Activated B cell treated with CpG ODN at 0.5 μM for 24 hours (primary cell): ENCODE measurements at regions of chr6 and their contacts with region 1.

Region 1: GRCh38 chr6:43667245-43668150 is 20.1 kb downstream of the MRPS18A start:
- DNase-seq: peak; percentile 84
- ATAC-seq: peak; percentile 80
- H3K4me3 Mint-ChIP-seq: peak overlapping the region; percentile 36
- H3K27ac Mint-ChIP-seq: peak overlapping the region; percentile 64
- H3K4me1 Mint-ChIP-seq: peaks cover 18% of the 10 kb centered on the region
- H3K27me3 Mint-ChIP-seq: no peaks in the 10 kb centered on the region
- CTCF ChIP-seq: peak; percentile 42

Region 2: DNA sequence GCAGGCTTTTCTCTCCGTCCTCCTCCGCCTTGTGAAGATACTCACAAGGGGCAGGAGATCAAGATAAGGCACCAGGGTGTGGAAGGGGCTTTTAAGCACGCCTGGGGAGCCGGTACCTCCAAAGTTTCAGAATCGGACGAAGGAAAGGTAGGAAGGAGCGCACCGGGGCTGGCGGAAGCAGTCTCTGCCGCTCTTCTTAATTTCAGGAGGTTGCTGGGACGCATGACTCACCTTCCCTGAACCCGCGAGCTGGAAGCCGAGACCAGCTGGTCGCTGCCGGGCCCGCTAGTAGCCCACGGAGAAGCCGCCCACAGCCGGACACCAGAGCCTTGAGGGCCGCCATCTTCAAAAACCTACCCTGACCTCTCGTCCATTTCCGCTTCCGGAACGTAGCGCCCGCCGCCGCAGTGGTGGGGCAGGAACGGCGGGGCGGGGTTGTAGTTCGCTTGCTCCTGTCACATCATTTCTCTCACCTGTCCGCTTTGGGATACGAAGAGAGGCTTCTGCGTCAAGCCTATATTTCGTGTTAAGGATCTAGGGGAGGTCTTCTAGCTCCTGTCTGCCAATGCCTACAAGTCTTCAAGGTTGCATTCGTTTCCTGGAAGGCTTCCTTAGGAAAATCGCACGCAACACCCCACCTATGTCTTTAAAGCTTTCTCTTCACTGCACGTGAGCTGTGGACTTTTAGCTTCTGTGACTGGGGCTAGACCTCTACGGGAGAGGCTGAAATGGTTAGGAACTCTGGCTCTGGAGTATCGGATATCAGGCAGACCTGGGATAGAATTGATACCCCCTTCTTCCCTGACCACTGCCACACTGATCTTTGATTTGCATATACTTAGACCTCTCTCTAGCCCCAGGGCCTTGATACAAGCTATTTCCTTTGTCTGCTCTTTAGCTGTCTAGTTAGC is 20.2 kb after region 1 on chr6 and contains the start of gene MRPS18A:
- CTCF ChIA-PET with region 1: interaction called, 6 read pairs
- POLR2A ChIA-PET with region 1: no interaction called
- intact Hi-C with region 1: loop called (anchors 1 kb)
- DNase-seq: peak; percentile 70
- ATAC-seq: peak; percentile 89
- H3K4me3 Mint-ChIP-seq: peak within 1 kb of the TSS; percentile 95
- H3K27ac Mint-ChIP-seq: peak within 1 kb of the TSS; percentile 85
- H3K4me1 Mint-ChIP-seq: peaks cover 52% of the 10 kb centered on the region
- H3K27me3 Mint-ChIP-seq: no peaks in the 10 kb centered on the region
- CTCF ChIP-seq: no peak
- total RNA-seq, gene MRPS18A: 57.0 and 59.1 TPM in 2 replicates

Region 3: DNA sequence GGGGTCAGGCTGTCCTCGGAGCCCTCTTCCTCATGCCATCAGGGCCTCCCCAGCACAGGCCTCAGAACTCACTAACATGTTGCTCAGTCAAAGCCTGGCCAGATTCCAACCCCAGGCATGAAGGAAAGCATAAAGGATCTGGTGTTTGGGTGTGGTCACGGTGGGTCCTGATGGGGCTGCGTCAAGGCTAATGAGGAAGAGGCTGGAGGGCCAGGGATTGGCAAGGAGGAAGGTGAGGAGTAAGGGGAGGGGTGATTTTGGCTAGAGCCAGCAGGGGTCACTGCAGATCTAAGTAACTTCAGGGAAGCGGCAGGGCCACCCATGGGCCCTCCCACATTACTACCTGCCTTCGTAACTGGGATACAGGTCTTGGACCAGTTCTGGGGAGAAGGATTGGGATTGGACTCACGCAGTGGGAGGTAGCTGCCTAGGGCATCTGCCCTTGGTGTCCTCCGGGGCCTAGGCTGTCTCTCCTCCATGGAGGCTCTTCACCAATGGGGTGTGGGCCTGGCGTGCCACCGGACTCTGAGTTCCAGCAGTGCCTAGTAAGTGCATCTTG is 56.3 kb after region 1 on chr6:
- CTCF ChIA-PET with region 1: interaction called, 18 read pairs
- POLR2A ChIA-PET with region 1: interaction called, 11 read pairs
- intact Hi-C with region 1: loop called (anchors 1 kb)
- DNase-seq: peak; percentile 46
- ATAC-seq: peak; percentile 74
- H3K4me3 Mint-ChIP-seq: no peak overlapping the region
- H3K27ac Mint-ChIP-seq: no peak overlapping the region
- H3K4me1 Mint-ChIP-seq: peaks cover 27% of the 10 kb centered on the region
- H3K27me3 Mint-ChIP-seq: peaks cover 5% of the 10 kb centered on the region
- CTCF ChIP-seq: peak; percentile 36

Region 4: DNA sequence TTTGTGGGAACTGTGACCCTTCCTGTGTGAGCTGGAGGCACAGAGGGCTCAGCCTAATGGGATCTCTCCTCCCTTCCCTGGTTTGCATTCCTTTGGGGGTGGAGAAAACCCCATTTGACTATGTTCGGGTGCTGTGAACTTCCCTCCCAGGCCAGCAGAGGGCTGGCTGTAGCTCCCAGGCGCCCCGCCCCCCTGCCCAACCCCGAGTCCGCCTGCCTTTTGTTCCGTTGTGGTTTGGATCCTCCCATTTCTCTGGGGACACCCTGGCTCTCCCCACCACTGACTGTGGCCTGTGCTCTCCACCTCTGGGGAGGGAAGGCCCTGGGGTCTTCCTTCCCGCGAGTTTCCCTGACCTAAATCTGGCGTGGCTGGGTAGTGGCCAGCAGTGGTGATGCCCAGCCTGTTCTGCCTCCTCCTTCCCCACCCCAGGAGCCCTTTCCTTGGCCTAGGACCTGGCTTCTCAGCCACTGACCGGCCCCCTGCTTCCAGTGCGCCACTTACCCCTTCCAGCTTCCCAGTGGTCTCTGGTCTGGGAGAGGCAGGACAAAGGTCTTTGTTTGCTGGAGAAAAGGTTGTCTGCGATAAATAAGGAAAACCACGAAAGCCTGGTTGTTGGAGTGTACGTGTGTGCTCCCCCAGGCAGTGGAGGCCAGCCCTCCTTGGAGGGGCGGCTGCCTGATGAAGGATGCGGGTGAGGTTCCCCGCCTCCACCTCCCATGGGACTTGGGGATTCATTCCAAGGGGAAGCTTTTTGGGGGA is 107.5 kb after region 1 on chr6:
- CTCF ChIA-PET with region 1: interaction called, 99 read pairs
- POLR2A ChIA-PET with region 1: interaction called, 30 read pairs
- intact Hi-C with region 1: loop called (anchors 1 kb)
- DNase-seq: peak; percentile 40
- ATAC-seq: no peak
- H3K4me3 Mint-ChIP-seq: peak overlapping the region; percentile 7
- H3K27ac Mint-ChIP-seq: no peak overlapping the region
- H3K4me1 Mint-ChIP-seq: peaks cover 40% of the 10 kb centered on the region
- H3K27me3 Mint-ChIP-seq: peaks cover 14% of the 10 kb centered on the region
- CTCF ChIP-seq: peak; percentile 54

Region 5: DNA sequence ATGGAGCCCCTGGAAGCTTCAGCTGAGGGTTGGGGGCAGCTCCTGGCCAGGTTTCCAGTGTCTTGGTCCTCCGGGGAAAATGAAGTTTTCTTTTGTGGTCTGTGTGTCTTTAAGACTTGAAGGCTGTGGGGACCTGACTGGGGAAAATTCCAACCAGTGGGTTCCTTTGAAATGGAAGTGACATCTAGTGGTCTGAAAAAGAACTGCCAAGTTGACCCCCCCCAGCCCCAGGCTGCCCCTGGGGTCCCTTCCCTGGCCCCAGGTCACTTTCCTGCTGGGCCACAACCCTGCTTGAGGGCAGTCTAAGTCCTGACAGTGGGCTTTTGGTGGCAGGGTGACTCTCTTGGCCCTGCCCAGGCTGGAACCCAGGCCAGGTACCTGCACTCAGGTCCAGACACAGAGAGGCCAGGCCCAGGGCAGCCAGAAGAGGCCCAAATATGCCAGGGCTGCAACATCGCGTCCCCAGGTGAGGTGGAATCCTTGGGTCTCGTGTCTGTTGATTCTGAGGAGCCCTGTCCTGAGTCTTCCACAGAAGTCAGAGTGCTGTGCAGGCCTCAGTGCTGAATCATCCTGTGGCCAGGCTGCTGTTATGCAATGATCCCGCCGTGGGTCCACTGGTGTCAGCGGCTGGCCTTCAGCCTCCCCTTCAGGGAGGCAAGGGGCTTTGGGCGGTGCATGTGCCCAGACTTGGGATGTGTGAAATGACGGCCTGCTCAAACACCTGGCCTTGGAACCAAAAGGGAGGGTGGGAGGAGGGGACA is 171.0 kb after region 1 on chr6:
- CTCF ChIA-PET with region 1: no interaction called
- POLR2A ChIA-PET with region 1: no interaction called
- intact Hi-C with region 1: loop called (anchors 1 kb)
- DNase-seq: no peak
- ATAC-seq: no peak
- H3K4me3 Mint-ChIP-seq: no peak overlapping the region
- H3K27ac Mint-ChIP-seq: no peak overlapping the region
- H3K4me1 Mint-ChIP-seq: no peaks in the 10 kb centered on the region
- H3K27me3 Mint-ChIP-seq: peaks cover 10% of the 10 kb centered on the region
- CTCF ChIP-seq: no peak

Region 6: GRCh38 chr6:44074439-44075136 is 407.1 kb after region 1 on chr6:
- CTCF ChIA-PET with region 1: interaction called, 52 read pairs
- POLR2A ChIA-PET with region 1: interaction called, 3 read pairs
- intact Hi-C with region 1: loop called (anchors 1 kb)
- DNase-seq: peak; percentile 56
- ATAC-seq: peak; percentile 60
- H3K4me3 Mint-ChIP-seq: peak overlapping the region; percentile 66
- H3K27ac Mint-ChIP-seq: peak overlapping the region; percentile 7
- H3K4me1 Mint-ChIP-seq: peaks cover 20% of the 10 kb centered on the region
- H3K27me3 Mint-ChIP-seq: peaks cover 30% of the 10 kb centered on the region
- CTCF ChIP-seq: peak; percentile 21